ENCODE measurements at regions of chr6 and their contacts with region 1.

Region 1: GRCh38 chr6:26234421-26235296 is 130.3 kb upstream of the BTN3A2 start:
- DNase-seq: peak; percentile 89
- ATAC-seq: peak; percentile 64
- H3K4me3 Mint-ChIP-seq: peak overlapping the region; percentile 78
- H3K27ac Mint-ChIP-seq: peak overlapping the region; percentile 99
- H3K4me1 Mint-ChIP-seq: peaks cover 41% of the 10 kb centered on the region
- H3K27me3 Mint-ChIP-seq: no peaks in the 10 kb centered on the region

Region 2: DNA sequence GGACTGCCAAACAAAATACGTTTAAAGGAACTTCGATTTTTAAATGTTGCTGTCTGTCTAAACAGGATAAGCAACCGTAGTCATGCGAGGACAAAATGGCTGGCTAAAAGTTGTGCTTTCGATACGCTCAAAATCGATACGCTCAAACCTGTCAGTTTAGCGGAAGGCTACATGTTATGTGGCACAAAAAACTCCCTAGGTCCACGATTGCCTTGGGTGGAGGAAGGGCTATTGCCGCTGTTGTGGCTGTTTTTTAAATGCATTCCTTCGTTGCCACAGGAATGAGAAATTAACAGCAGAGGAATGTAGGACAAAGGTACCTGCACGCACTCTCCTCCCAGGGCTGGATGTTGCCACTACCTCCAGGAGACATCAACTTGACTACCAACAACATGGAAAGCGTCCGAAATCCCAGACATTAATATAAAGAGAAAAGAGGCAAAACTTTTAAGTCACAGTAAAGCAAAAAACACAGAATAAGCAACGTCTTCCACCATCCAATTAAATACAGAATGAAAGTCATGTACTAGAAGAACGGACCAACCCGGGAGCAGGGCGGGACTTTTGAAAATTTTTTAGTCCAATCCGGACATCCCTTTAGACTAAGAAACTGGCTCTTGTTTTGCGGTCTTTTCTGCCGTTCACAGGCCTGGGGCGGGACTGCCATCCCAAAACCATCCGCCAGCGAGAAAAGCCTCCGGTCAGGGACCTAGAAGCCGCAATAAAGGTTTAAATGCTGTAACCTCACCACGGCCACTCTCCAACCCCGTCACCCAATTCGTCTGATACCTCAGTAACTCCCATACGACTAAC is 179.6 kb before region 1 on chr6:
- CTCF ChIA-PET with region 1: no interaction called
- POLR2A ChIA-PET with region 1: interaction called, 62 read pairs
- DNase-seq: peak; percentile 95
- ATAC-seq: peak; percentile 72
- H3K4me3 Mint-ChIP-seq: peak overlapping the region; percentile 87
- H3K27ac Mint-ChIP-seq: peak overlapping the region; percentile 100
- H3K4me1 Mint-ChIP-seq: peaks cover 36% of the 10 kb centered on the region
- H3K27me3 Mint-ChIP-seq: no peaks in the 10 kb centered on the region

Region 3: DNA sequence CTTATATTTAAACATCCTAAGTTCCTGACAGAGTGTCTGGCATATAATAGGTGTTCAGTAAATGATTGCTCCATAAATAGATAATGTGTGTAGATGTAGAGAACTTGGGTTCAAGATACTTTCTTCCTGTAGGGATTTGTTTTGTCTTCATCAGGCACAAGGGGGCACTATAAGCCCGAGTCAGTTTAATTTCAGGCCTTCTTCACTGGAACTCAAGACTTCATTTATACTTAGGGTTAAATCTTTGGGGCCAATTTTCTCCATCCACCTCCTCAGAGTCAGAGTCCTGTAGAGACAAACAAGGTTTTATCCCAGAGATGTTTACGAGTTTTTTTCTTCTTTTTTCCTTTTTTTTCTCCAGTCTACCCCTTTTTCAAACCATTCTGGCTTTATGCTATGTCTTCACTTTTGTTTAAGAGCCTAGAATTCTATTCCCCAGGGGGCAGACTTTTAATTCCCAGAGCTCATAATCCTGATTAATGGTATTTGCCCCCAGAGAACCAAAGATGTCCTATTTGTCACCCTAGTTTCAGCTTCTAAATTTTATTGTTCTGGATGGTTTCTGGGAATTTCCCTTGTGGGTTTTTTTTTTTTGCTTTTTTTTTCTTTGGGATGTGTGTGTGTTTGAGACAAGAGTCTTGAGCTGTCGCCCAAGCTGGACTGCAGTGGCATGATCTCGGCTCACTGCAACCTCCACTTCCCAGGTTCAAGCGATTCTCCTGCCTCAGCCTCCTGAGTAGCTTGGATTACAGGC is 59.1 kb before region 1 on chr6:
- CTCF ChIA-PET with region 1: interaction called, 5 read pairs
- POLR2A ChIA-PET with region 1: interaction called, 113 read pairs
- DNase-seq: peak; percentile 82
- ATAC-seq: peak; percentile 11
- H3K4me3 Mint-ChIP-seq: peak overlapping the region; percentile 38
- H3K27ac Mint-ChIP-seq: peak overlapping the region; percentile 59
- H3K4me1 Mint-ChIP-seq: peaks cover 42% of the 10 kb centered on the region
- H3K27me3 Mint-ChIP-seq: no peaks in the 10 kb centered on the region

Region 4: GRCh38 chr6:26249957-26250697 is 15.5 kb after region 1 on chr6:
- CTCF ChIA-PET with region 1: interaction called, 12 read pairs
- POLR2A ChIA-PET with region 1: interaction called, 11 read pairs
- DNase-seq: peak; percentile 85
- ATAC-seq: peak; percentile 55
- H3K4me3 Mint-ChIP-seq: peak overlapping the region; percentile 84
- H3K27ac Mint-ChIP-seq: peak overlapping the region; percentile 100
- H3K4me1 Mint-ChIP-seq: peaks cover 30% of the 10 kb centered on the region
- H3K27me3 Mint-ChIP-seq: no peaks in the 10 kb centered on the region

Region 5: GRCh38 chr6:27138837-27139755 is 904.4 kb after region 1 on chr6:
- CTCF ChIA-PET with region 1: no interaction called
- POLR2A ChIA-PET with region 1: interaction called, 71 read pairs
- DNase-seq: peak; percentile 87
- ATAC-seq: peak; percentile 68
- H3K4me3 Mint-ChIP-seq: peak overlapping the region; percentile 95
- H3K27ac Mint-ChIP-seq: peak overlapping the region; percentile 98
- H3K4me1 Mint-ChIP-seq: peaks cover 71% of the 10 kb centered on the region
- H3K27me3 Mint-ChIP-seq: no peaks in the 10 kb centered on the region

Region 6: DNA sequence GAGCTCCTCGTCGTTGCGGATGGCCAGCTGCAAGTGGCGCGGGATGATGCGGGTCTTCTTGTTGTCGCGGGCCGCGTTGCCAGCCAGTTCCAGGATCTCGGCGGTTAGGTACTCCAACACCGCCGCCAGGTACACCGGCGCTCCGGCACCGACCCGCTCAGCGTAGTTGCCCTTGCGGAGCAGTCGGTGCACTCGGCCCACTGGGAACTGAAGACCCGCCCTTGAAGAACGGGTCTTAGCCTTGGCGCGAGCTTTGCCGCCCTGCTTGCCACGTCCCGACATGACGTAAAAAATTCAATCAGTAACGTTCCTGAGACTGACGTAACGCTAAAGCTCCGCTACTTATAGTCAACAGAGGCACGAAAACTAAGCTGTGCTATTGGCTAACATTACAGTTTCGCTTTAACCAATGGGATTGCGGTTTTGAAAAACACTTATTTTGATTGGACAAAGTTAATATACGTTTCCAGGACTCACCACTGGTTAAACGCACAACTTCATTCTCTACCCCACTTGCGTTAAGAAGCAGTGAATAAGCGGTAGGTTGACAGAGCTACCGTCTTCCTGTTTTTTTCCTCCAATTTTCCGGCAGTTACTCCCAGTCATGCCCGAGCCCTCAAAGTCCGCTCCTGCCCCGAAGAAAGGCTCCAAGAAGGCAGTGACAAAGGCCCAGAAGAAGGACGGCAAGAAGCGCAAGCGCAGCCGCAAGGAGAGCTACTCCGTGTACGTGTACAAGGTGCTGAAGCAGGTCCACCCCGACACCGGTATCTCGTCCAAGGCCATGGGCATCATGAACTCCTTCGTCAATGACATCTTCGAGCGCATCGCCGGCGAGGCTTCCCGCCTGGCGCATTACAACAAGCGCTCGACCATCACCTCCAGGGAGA is 1603.6 kb after region 1 on chr6:
- CTCF ChIA-PET with region 1: no interaction called
- POLR2A ChIA-PET with region 1: interaction called, 31 read pairs
- DNase-seq: peak; percentile 92
- ATAC-seq: peak; percentile 78
- H3K4me3 Mint-ChIP-seq: no peak overlapping the region
- H3K27ac Mint-ChIP-seq: no peak overlapping the region
- H3K4me1 Mint-ChIP-seq: peaks cover 33% of the 10 kb centered on the region
- H3K27me3 Mint-ChIP-seq: no peaks in the 10 kb centered on the region

Measured in activated CD8-positive, alpha-beta T cell treated with anti-CD3 and anti-CD28 coated beads, Interleukin-2, amount 10 ng/mL, durations not matched to agents 7 days and 5 days (primary cell).